Head of caudate nucleus (tissue), 42 donors: ENCODE measurements at regions of chr13 and their contacts with region 1.

Region 1: DNA sequence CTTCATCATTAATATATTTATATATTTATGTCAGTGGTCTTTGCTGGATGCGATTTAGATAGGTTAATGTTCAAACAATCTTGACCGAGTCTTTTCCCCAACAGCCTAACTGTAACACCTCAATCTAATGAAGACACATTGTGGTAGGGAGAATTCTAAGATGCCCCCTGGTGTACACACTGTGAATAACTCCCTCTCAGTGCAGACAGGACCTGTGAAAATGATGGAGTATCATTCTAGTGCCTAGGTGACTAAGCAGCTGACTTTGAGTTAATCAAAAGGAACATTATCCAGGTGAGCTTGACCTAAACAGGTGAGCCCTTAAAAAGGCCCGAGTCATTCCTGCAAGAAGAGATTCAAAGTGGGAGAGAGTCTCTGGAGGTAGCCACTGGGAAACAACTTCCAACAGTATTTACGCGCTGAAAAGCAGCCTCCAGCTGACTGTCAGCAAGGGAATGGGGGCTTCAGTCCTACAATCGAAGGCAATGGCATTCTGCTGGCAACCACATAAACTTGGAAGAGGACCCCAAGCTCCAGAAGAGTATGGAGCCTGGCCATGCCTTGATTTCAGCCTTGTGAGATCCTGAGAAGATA is 28.0 kb upstream of the KBTBD7 start:
- DNase-seq: peak in 28 of 42 donors; percentile 10 to 83 (median 50)

Region 2: DNA sequence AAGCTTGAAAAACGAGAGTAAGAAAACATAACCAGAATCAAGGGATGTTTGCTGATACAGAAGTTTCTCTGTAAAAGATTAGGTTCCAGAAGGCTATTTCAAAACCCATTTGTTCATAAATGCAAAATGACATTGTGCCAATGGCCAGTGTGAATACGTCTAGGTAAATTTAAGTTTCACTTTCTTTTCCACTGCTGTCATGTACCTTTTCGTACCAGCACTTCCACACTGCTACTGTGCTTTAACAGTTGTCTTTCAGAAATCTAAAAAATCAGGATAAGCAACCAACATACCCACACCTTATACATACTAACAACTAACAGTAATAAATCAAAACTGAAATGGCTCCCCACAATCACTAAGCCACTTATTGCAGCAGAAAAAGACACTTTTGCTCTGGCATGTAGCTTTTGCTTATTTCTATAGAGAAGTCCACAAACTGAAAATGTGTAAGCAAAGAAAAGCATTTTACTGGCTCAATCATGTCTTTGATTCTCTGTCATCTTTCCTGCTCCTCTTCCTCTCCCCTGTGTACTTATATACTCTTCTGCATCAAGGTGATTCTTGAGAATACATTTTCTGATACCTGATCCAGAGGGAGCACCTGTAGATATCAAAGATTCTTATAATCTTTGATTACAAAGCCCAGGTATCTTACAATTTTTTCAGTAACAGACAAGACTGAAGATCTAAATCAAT is 237.5 kb before region 1 on chr13:
- intact Hi-C with region 1: no loop called
- DNase-seq: no peak

Region 3: GRCh38 chr13:41075034-41075433 is 147.3 kb before region 1 on chr13:
- intact Hi-C with region 1: loop called (anchors 5 kb)
- DNase-seq: peak in 15 of 42 donors; percentile 6 to 73 (median 33)